Psoas muscle (tissue), 8 donors: ENCODE measurements at regions of chr3 and their contacts with region 1.

Region 1: GRCh38 chr3:31132132-31132769 is 237.8 kb upstream of the GADL1 start:
- DNase-seq: no peak
- ATAC-seq: peak; percentile 68 to 91 (median 77)
- H3K4me3 ChIP-seq: no peak overlapping the region
- H3K27ac ChIP-seq: no peak overlapping the region
- H3K4me1 ChIP-seq: no peaks in the 10 kb centered on the region
- H3K27me3 ChIP-seq: no peaks in the 10 kb centered on the region
- CTCF ChIP-seq: peak; percentile 81

Region 2: GRCh38 chr3:30779686-30780287 is 352.5 kb before region 1 on chr3:
- intact Hi-C with region 1: loop called (anchors 2 to 5 kb)
- DNase-seq: no peak
- ATAC-seq: peak in 3 of 4 donors; percentile 65 to 83 (median 79)
- H3K4me3 ChIP-seq: no peak overlapping the region
- H3K27ac ChIP-seq: no peak overlapping the region
- H3K4me1 ChIP-seq: no peaks in the 10 kb centered on the region
- H3K27me3 ChIP-seq: no peaks in the 10 kb centered on the region
- CTCF ChIP-seq: peak; percentile 56

Region 3: DNA sequence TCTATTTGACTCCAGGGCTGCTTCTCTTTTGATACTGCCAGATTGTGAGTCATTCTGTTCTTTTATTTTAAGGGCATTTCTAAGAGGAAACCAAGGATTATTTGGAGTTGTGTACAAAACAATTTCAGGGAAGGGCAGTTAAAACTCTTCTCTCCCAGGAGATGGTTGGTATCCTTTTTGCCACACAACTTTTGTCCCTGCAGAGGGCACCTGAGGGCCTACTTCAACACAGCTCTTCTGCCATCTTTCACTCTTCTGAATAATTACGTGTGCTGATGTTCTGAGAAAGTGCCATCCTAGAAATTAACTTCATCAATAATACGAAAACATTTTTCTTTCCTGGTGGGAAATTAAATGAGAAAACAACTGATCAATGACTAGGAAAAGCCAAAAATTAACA is 162.1 kb before region 1 on chr3:
- intact Hi-C with region 1: loop called in 1 of 2 experiments (anchors 5 kb)
- DNase-seq: no peak
- ATAC-seq: no peak
- H3K4me3 ChIP-seq: no peak overlapping the region
- H3K27ac ChIP-seq: no peak overlapping the region
- H3K4me1 ChIP-seq: no peaks in the 10 kb centered on the region
- H3K27me3 ChIP-seq: no peaks in the 10 kb centered on the region
- CTCF ChIP-seq: peak; percentile 38

Region 4: GRCh38 chr3:31086698-31087097 is 45.6 kb before region 1 on chr3:
- intact Hi-C with region 1: no loop called
- DNase-seq: no peak
- ATAC-seq: peak in 3 of 4 donors; percentile 24 to 40 (median 36)
- H3K4me3 ChIP-seq: no peak overlapping the region
- H3K27ac ChIP-seq: no peak overlapping the region
- H3K4me1 ChIP-seq: no peaks in the 10 kb centered on the region
- H3K27me3 ChIP-seq: no peaks in the 10 kb centered on the region
- CTCF ChIP-seq: no peak